ENCODE measurements at regions of chr18 and their contacts with region 1.

Region 1: DNA sequence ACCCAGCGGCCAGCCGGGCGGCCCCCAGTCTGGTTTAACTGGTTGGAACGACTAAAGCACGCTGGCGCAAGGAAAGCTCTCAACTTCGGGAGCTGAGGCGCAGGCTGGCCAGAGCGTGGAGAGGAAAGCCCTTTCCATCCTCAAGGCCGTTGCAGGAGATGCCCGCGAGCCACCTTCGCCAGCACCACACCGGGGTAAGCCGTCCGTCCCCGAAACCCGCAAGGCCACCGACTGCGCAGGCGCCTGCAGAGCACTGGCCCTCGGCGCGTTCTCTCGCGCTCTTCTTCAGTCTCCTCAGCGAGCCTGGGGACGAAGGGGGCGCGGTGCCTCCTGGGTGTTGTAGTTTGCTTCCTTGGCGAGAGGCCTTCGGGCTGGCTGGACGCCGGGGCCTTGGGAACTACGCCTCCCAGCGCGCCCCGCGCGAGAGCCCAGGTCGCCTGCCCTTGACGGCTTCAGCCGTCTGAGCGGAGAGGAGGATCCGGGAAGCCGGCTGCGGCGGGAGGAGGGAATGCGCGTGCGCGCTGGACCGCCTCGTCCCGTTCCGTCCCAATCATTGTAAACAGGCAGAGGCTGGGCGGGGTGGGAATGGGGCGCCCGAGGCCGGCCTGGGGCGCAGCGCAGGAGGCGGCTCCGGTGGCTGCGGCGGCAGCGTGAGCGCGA is at the start of gene RALBP1:
- DNase-seq: peak; percentile 99
- ATAC-seq: peak; percentile 95
- H3K4me3 ChIP-seq: peak within 1 kb of the TSS; percentile 70
- H3K27ac ChIP-seq: peak within 1 kb of the TSS; percentile 90
- H3K4me1 ChIP-seq: peaks cover 4% of the 10 kb centered on the region; the same call in 1 of the 2 replicates
- H3K27me3 ChIP-seq: no peaks in the 10 kb centered on the region
- CTCF ChIP-seq: 0 out of 2 replicates have a peak, but pooled peaks have one; percentile 23
- POLR2A ChIP-seq: no peak
- RAD21 ChIP-seq: no peak
- total RNA-seq, gene RALBP1: 38.2 and 58.9 TPM in 2 replicates

Region 2: GRCh38 chr18:9240270-9240669 is 234.8 kb before region 1 on chr18:
- CTCF ChIA-PET with region 1: no interaction called
- POLR2A ChIA-PET with region 1: no interaction called
- dilution Hi-C with region 1: no loop called
- in situ Hi-C with region 1: no loop called
- intact Hi-C with region 1: no loop called
- DNase-seq: no peak
- ATAC-seq: no peak
- H3K4me3 ChIP-seq: no peak overlapping the region
- H3K27ac ChIP-seq: no peak overlapping the region
- H3K4me1 ChIP-seq: no peaks in the 10 kb centered on the region
- H3K27me3 ChIP-seq: no peaks in the 10 kb centered on the region
- CTCF ChIP-seq: no peak
- POLR2A ChIP-seq: no peak
- RAD21 ChIP-seq: no peak

Region 3: DNA sequence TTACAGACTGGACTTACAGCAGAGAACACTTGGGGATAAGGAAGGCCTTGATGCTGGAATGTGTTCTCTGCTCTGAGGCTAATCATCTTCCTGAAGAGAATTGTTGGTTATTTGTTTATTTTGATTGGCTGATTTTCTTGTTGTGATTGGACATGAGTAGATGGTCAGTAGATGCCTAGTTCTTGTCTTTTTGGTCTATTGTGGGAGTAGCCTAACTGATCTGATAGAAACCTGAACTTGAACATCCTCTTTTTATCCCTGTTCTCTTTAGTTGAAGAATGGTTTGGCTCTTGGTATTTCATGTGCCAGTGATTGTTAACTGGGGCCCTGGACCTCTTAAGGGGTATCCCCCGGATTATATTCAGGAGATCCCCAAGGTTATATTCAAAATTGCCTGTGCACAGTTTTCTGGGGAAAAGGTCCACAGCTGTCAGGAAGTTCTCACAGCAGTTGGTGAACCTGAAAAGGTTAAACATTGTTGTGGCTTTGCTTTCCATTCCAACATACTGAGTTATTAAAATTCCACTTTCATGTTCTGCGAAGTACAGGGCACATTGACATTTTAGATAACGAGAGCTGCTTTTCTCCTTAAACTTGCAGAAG is 126.9 kb before region 1 on chr18:
- CTCF ChIA-PET with region 1: no interaction called
- POLR2A ChIA-PET with region 1: no interaction called
- dilution Hi-C with region 1: no loop called
- in situ Hi-C with region 1: no loop called
- intact Hi-C with region 1: loop called (anchors 5 kb)
- DNase-seq: peak; percentile 54
- ATAC-seq: peak; percentile 46
- H3K4me3 ChIP-seq: no peak overlapping the region
- H3K27ac ChIP-seq: peak overlapping the region; percentile 60
- H3K4me1 ChIP-seq: peaks cover 13% of the 10 kb centered on the region
- H3K27me3 ChIP-seq: no peaks in the 10 kb centered on the region
- CTCF ChIP-seq: no peak
- POLR2A ChIP-seq: no peak
- RAD21 ChIP-seq: no peak

Region 4: GRCh38 chr18:9413576-9413975 is 61.5 kb before region 1 on chr18:
- CTCF ChIA-PET with region 1: no interaction called
- POLR2A ChIA-PET with region 1: interaction called, 3 read pairs
- dilution Hi-C with region 1: no loop called
- in situ Hi-C with region 1: no loop called
- intact Hi-C with region 1: loop called (anchors 5 kb)
- DNase-seq: peak; percentile 91
- ATAC-seq: peak; percentile 79
- H3K4me3 ChIP-seq: no peak overlapping the region
- H3K27ac ChIP-seq: no peak overlapping the region
- H3K4me1 ChIP-seq: peaks cover 7% of the 10 kb centered on the region
- H3K27me3 ChIP-seq: no peaks in the 10 kb centered on the region
- CTCF ChIP-seq: no peak
- POLR2A ChIP-seq: no peak
- RAD21 ChIP-seq: no peak

Region 5: GRCh38 chr18:9516437-9517064 is 41.4 kb after region 1 on chr18:
- CTCF ChIA-PET with region 1: no interaction called
- POLR2A ChIA-PET with region 1: no interaction called
- dilution Hi-C with region 1: no loop called
- in situ Hi-C with region 1: no loop called
- intact Hi-C with region 1: loop called (anchors 5 kb)
- DNase-seq: peak; percentile 46
- ATAC-seq: 0 out of 2 replicates have a peak, but pooled peaks have one; percentile 8
- H3K4me3 ChIP-seq: no peak overlapping the region
- H3K27ac ChIP-seq: no peak overlapping the region
- H3K4me1 ChIP-seq: peaks cover 16% of the 10 kb centered on the region
- H3K27me3 ChIP-seq: no peaks in the 10 kb centered on the region
- CTCF ChIP-seq: peak; percentile 76
- POLR2A ChIP-seq: no peak
- RAD21 ChIP-seq: peak; percentile 82

Region 6: DNA sequence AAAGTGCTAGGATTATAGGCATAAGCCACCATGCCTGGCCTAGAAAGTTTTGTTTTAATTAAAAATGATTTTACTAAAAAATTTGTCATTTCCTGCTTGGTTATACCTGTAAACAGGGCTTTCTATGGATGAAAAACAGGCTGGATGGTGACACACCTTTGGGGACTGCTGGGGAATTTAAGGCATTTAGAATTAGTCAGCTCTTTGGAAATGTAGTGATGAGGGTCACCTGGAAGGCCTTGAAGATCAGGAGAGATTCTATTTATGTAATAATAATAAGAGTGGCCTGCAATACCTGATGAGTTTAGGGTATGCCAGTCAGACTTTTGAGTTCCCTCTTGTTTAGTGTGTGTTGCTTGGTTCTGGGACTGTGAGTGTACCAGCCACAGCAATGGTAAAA is 51.3 kb after region 1 on chr18:
- CTCF ChIA-PET with region 1: no interaction called
- POLR2A ChIA-PET with region 1: no interaction called
- dilution Hi-C with region 1: no loop called
- in situ Hi-C with region 1: loop called (anchors 5 kb)
- intact Hi-C with region 1: no loop called
- DNase-seq: no peak
- ATAC-seq: no peak
- H3K4me3 ChIP-seq: no peak overlapping the region
- H3K27ac ChIP-seq: no peak overlapping the region
- H3K4me1 ChIP-seq: 0 out of 2 replicates have a peak, but pooled peaks cover 2% of the 10 kb centered on the region
- H3K27me3 ChIP-seq: no peaks in the 10 kb centered on the region
- CTCF ChIP-seq: no peak
- POLR2A ChIP-seq: no peak
- RAD21 ChIP-seq: no peak